CD8-positive, alpha-beta T cell (primary cell): ENCODE measurements at regions of chrX and their contacts with region 1.

Region 1: DNA sequence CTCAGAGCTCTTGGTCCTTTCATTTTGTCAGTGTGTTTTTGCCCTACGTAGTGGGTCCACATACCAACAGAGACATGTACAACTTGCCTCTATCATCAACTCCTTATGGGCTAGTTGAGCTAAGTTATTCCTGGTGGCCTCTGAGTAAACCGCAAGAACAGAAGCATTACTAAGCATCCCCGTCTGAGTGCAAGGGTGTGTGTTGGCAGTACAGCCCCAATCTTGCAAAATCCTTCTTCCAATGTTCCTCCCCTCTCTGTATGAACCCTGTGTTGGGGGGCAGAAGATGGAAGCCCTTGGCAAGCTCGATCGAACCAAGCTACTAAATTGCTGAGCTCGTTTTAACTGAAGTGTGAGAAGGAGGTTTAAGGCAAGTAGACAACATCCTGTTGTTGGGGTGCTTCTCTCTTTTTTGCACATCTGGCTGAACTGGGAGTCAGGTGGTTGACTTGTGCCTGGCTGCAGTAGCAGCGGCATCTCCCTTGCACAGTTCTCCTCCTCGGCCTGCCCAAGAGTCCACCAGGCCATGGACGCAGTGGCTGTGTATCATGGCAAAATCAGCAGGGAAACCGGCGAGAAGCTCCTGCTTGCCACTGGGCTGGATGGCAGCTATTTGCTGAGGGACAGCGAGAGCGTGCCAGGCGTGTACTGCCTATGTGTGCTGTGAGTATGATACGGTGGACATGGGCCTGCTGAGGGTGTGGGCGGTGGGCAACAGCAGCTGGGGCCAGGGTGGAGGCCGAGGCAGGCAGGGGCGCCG is at the start of gene SH2D1A:
- DNase-seq: peak in 7 of 9 experiments; percentile 7 to 74 (median 32)
- ATAC-seq: peak; percentile 35
- H3K4me3 ChIP-seq: peak within 1 kb of the TSS; percentile 61 to 62
- H3K4me3 Mint-ChIP-seq: peak within 1 kb of the TSS; percentile 96
- H3K27ac ChIP-seq: peak within 1 kb of the TSS; percentile 70 to 84
- H3K27ac Mint-ChIP-seq: peak within 1 kb of the TSS; percentile 98
- H3K4me1 ChIP-seq: peaks cover 50% of the 10 kb centered on the region
- H3K4me1 Mint-ChIP-seq: peaks cover 49% of the 10 kb centered on the region
- H3K27me3 ChIP-seq: no peaks in the 10 kb centered on the region
- H3K27me3 Mint-ChIP-seq: no peaks in the 10 kb centered on the region
- CTCF ChIP-seq: no peak
- total RNA-seq, gene SH2D1A: 44.4 to 50.3 TPM

Region 2: DNA sequence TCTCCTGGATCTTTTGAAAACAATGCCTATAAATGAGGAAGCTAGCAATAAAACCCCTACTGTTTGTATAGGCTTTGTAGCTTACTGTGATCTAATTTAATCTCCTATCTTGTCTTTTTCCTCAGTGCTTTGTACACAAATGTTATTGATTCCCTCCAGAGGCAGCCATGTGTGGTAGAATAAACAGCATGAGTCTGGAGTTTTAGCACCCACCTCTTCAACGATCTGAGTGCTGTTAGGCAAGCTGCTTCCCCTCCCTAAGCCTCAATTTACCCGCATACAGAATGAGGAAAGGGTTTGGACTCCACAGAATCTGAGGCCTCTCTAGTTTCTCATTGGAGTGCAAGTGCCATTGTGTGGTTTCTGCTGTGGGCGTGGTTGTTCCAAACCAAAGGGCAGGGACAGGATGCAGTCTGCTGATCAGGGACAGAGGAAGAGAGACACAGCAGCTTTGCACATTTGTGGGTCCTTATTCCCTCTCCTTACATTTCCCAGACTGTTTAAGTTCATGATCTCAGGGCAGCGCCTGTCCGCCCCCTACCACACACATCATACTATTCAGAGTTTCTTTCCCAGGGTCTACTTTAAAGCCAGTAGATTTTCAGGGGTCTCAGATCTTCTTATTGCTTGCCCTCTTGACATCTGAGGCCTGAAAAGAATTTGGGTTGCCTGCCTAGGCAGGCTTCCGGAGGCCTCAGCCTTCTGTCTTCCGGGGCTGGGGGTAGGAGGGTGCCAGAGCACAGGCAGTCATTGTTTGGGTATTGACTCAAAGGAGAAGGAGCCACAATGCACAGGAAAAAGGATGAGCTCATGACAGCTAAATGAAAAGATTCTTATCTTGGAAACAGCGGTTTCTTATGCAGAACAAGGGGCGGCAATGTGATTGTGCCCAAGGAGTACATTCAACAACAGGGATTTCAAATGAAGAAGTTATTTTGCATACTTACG is 128.7 kb before region 1 on chrX:
- CTCF ChIA-PET with region 1: interaction called, 3 read pairs
- POLR2A ChIA-PET with region 1: interaction called, 16 read pairs
- intact Hi-C with region 1: loop called (anchors 2 to 5 kb)
- DNase-seq: peak; percentile 19 to 83 (median 64)
- ATAC-seq: peak; percentile 94
- H3K4me3 ChIP-seq: peak overlapping the region in 1 of 2 experiments; percentile 18
- H3K4me3 Mint-ChIP-seq: peak overlapping the region; percentile 63
- H3K27ac ChIP-seq: peak overlapping the region; percentile 27 to 80
- H3K27ac Mint-ChIP-seq: peak overlapping the region; percentile 93
- H3K4me1 ChIP-seq: peaks cover 52% of the 10 kb centered on the region
- H3K4me1 Mint-ChIP-seq: peaks cover 74% of the 10 kb centered on the region
- H3K27me3 ChIP-seq: no peaks in the 10 kb centered on the region
- H3K27me3 Mint-ChIP-seq: no peaks in the 10 kb centered on the region
- CTCF ChIP-seq: no peak

Region 3: GRCh38 chrX:124300405-124300804 is 45.9 kb before region 1 on chrX:
- CTCF ChIA-PET with region 1: no interaction called
- POLR2A ChIA-PET with region 1: interaction called, 4 read pairs
- intact Hi-C with region 1: loop called in 1 of 2 experiments (anchors 5 kb)
- DNase-seq: peak in 2 of 9 experiments; percentile 44 to 71
- ATAC-seq: peak; percentile 42
- H3K4me3 ChIP-seq: peak overlapping the region in 1 of 2 experiments; percentile 31
- H3K4me3 Mint-ChIP-seq: peak overlapping the region; percentile 43
- H3K27ac ChIP-seq: peak overlapping the region in 1 of 2 experiments; percentile 39
- H3K27ac Mint-ChIP-seq: no peak overlapping the region
- H3K4me1 ChIP-seq: no peaks in the 10 kb centered on the region
- H3K4me1 Mint-ChIP-seq: peaks cover 10% of the 10 kb centered on the region
- H3K27me3 ChIP-seq: no peaks in the 10 kb centered on the region
- H3K27me3 Mint-ChIP-seq: no peaks in the 10 kb centered on the region
- CTCF ChIP-seq: no peak

Region 4: GRCh38 chrX:124358800-124359383 is 12.6 kb after region 1 on chrX:
- CTCF ChIA-PET with region 1: interaction called, 3 read pairs
- POLR2A ChIA-PET with region 1: interaction called, 4 read pairs
- intact Hi-C with region 1: loop called in 1 of 2 experiments (anchors 1 kb)
- DNase-seq: peak in 2 of 9 experiments; percentile 43 to 59
- ATAC-seq: peak; percentile 67
- H3K4me3 ChIP-seq: peak overlapping the region in 1 of 2 experiments; percentile 10
- H3K4me3 Mint-ChIP-seq: peak overlapping the region; percentile 69
- H3K27ac ChIP-seq: peak overlapping the region in 1 of 2 experiments; percentile 70
- H3K27ac Mint-ChIP-seq: peak overlapping the region; percentile 88
- H3K4me1 ChIP-seq: peaks cover 38% of the 10 kb centered on the region
- H3K4me1 Mint-ChIP-seq: peaks cover 60% of the 10 kb centered on the region
- H3K27me3 ChIP-seq: no peaks in the 10 kb centered on the region
- H3K27me3 Mint-ChIP-seq: no peaks in the 10 kb centered on the region
- CTCF ChIP-seq: no peak

Region 5: DNA sequence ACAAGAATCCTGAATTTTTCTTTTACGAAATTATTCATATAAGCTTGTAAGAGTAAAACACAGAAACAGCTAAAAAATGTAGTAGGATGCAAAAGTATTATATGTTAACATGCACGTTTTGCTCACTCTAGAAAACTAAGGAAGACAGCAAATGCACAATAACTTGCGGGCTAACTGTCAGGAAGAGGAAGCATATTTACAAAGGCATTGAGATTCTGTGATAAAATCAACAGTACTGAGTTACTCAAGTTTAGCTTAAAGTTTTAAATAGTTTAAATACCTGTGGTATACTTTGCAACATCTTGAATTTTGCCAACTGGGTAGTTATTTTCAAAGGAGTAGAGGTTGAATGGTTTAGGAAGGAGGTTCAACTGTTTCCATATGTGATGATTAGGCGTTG is 37.1 kb after region 1 on chrX:
- CTCF ChIA-PET with region 1: no interaction called
- POLR2A ChIA-PET with region 1: no interaction called
- intact Hi-C with region 1: loop called in 1 of 2 experiments (anchors 5 kb)
- DNase-seq: no peak
- ATAC-seq: no peak
- H3K4me3 ChIP-seq: no peak overlapping the region
- H3K4me3 Mint-ChIP-seq: no peak overlapping the region
- H3K27ac ChIP-seq: no peak overlapping the region
- H3K27ac Mint-ChIP-seq: peak overlapping the region; percentile 34
- H3K4me1 ChIP-seq: no peaks in the 10 kb centered on the region
- H3K4me1 Mint-ChIP-seq: peaks cover 24% of the 10 kb centered on the region
- H3K27me3 ChIP-seq: no peaks in the 10 kb centered on the region
- H3K27me3 Mint-ChIP-seq: no peaks in the 10 kb centered on the region
- CTCF ChIP-seq: no peak